ENCODE measurements at regions of chr6 and their contacts with region 1.

Region 1: GRCh38 chr6:139591075-139591865 is 216.8 kb upstream of the CITED2 start:
- DNase-seq: peak; percentile 5
- H3K4me3 ChIP-seq: peak overlapping the region in 1 of 4 donors; percentile 9
- H3K27ac ChIP-seq: peak overlapping the region; percentile 83 to 86 (median 83)
- H3K4me1 ChIP-seq: peaks cover 35 to 90% (median 81%) of the 10 kb centered on the region in 4 donors
- H3K27me3 ChIP-seq: no peaks in the 10 kb centered on the region
- CTCF ChIP-seq: no peak
- EP300 ChIP-seq: no peak
- POLR2A ChIP-seq: no peak

Region 2: GRCh38 chr6:139529420-139529819 is 61.9 kb before region 1 on chr6:
- intact Hi-C with region 1: no loop called
- DNase-seq: no peak
- H3K4me3 ChIP-seq: no peak overlapping the region
- H3K27ac ChIP-seq: no peak overlapping the region
- H3K4me1 ChIP-seq: peaks cover 11 to 50% (median 35%) of the 10 kb centered on the region in 4 donors
- H3K27me3 ChIP-seq: no peaks in the 10 kb centered on the region
- CTCF ChIP-seq: no peak
- EP300 ChIP-seq: no peak
- POLR2A ChIP-seq: no peak

Region 3: DNA sequence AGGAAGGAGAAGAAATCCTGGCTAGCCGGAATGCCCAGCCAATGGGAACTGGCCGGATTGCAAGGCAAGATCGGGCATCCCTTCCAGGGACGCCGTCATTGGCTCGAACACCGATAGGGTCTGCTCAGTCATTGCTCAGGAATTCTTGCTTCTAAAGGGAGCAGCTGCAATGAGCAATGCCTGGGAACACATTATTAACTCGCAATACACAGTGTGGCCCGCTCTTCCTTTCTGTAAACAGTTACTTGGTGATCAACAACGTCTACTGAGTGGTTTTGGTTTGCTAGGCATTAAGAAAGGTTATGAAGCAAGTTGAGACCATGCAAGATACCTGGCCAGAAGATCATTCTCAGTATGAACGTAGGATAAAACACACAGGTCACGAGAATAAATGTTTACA is 51.4 kb before region 1 on chr6:
- intact Hi-C with region 1: loop called (anchors 5 kb)
- DNase-seq: no peak
- H3K4me3 ChIP-seq: no peak overlapping the region
- H3K27ac ChIP-seq: peak overlapping the region; percentile 18 to 63 (median 42)
- H3K4me1 ChIP-seq: peaks cover 0 to 58% (median 47%) of the 10 kb centered on the region in 4 donors
- H3K27me3 ChIP-seq: no peaks in the 10 kb centered on the region
- CTCF ChIP-seq: no peak
- EP300 ChIP-seq: no peak
- POLR2A ChIP-seq: no peak

Region 4: GRCh38 chr6:139679516-139680179 is 88.4 kb after region 1 on chr6:
- intact Hi-C with region 1: no loop called
- DNase-seq: no peak
- H3K4me3 ChIP-seq: no peak overlapping the region
- H3K27ac ChIP-seq: no peak overlapping the region
- H3K4me1 ChIP-seq: peaks cover 0 to 11% (median 6%) of the 10 kb centered on the region in 4 donors
- H3K27me3 ChIP-seq: no peaks in the 10 kb centered on the region
- CTCF ChIP-seq: no peak
- EP300 ChIP-seq: no peak
- POLR2A ChIP-seq: no peak

Region 5: DNA sequence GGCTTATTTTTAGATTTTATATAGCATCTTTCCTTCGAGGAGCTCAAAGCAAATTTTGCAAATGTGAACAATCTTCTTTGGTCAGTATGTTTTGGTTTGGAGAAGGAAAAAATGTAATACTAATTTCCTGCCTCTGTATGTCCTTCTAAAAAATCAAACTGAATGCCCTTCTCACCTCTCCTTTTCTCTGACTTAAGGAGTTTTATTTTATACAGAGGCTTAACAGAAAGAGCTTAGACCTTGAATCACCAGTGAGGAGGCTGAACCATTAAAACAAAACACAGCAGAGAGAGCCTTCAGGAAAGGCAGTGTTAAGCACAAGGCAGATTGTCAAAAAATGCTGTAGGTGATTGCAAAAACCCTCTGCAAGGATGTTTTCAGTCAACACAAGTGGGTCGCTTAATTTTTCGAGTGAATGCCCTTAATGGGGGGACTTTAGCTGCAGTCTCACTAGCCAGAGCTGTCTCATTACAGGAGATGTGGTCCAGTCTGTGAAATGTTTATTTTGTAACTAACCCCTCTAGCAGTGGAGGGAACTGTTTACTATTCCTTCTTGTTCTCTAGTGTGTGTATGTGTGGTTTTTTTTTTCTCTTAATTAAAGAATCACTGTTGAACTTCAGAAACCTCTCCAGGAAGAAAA is 264.5 kb after region 1 on chr6:
- intact Hi-C with region 1: no loop called
- DNase-seq: no peak
- H3K4me3 ChIP-seq: no peak overlapping the region
- H3K27ac ChIP-seq: peak overlapping the region in 1 of 4 donors; percentile 35
- H3K4me1 ChIP-seq: peaks cover 0 to 21% (median 16%) of the 10 kb centered on the region in 4 donors
- H3K27me3 ChIP-seq: no peaks in the 10 kb centered on the region
- CTCF ChIP-seq: no peak
- EP300 ChIP-seq: no peak
- POLR2A ChIP-seq: no peak

Region 6: DNA sequence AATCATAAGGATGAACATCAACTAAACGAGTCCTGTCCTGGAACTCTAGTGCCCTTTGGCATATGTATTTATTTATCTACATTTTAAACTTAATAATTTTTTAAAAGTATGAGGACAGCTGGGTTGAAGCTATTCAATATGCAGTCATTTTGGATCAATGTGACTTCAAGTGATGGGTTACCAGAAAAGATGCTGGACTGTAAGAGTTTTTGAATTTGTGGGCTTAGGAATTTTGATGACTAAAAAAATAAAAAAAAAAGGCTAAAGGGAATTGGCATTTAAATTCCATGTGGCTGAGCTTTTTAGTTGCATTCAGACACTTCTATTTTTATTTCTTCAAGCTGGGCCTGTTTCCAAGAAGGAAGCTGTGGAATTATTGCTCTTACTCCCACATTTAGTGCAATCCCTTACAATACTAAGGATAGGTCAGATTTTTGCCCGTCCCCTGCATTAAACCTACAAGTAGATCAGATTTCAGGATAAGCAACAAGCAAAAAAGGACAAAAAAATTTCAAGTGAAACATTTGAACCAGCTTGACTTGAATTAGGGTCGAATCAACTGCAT is 487.4 kb after region 1 on chr6:
- intact Hi-C with region 1: no loop called
- DNase-seq: no peak
- H3K4me3 ChIP-seq: no peak overlapping the region
- H3K27ac ChIP-seq: peak overlapping the region; percentile 43 to 56 (median 52)
- H3K4me1 ChIP-seq: peaks cover 16 to 45% (median 37%) of the 10 kb centered on the region in 4 donors
- H3K27me3 ChIP-seq: no peaks in the 10 kb centered on the region
- CTCF ChIP-seq: no peak
- EP300 ChIP-seq: no peak
- POLR2A ChIP-seq: no peak

Measured in esophagus muscularis mucosa (tissue), 4 donors.